ENCODE measurements at regions of chr5 and their contacts with region 1.

Region 1: GRCh38 chr5:142748568-142749249 is 21.5 kb upstream of the ARHGAP26 start:
- DNase-seq: peak; percentile 53
- ATAC-seq: peak; percentile 75
- H3K4me3 Mint-ChIP-seq: no peak overlapping the region
- H3K27ac Mint-ChIP-seq: no peak overlapping the region
- H3K4me1 Mint-ChIP-seq: peaks cover 7% of the 10 kb centered on the region
- H3K27me3 Mint-ChIP-seq: no peaks in the 10 kb centered on the region
- CTCF ChIP-seq: peak; percentile 51; the same call in 1 of the 2 replicates

Region 2: GRCh38 chr5:142472300-142472951 is 276.3 kb before region 1 on chr5:
- CTCF ChIA-PET with region 1: no interaction called
- POLR2A ChIA-PET with region 1: no interaction called
- DNase-seq: no peak
- ATAC-seq: no peak
- H3K4me3 Mint-ChIP-seq: no peak overlapping the region
- H3K27ac Mint-ChIP-seq: no peak overlapping the region; the same call in 1 of the 2 replicates
- H3K4me1 Mint-ChIP-seq: peaks cover 43% of the 10 kb centered on the region
- H3K27me3 Mint-ChIP-seq: no peaks in the 10 kb centered on the region; the same call in 1 of the 2 replicates
- CTCF ChIP-seq: no peak

Region 3: DNA sequence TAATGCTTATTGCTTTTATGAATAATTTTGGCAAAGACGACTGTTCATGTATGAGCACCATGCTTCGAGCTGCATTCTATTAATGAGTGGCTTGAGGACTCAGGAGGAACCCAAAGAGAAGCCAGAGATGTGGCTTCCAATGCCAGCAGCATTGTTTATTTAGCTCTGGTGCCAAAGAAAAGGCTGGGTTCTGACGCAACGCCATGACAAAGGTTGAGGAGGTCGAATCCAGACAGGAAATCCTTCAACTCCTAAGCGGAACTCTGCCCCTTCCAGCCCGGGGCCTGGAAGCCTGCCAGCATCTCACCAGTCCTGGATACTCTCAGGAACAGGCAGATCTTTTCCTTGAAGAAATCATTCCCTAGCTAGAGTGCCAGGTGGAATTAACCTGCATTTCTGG is 125.8 kb after region 1 on chr5:
- CTCF ChIA-PET with region 1: interaction called, 68 read pairs
- POLR2A ChIA-PET with region 1: no interaction called
- DNase-seq: no peak
- ATAC-seq: no peak
- H3K4me3 Mint-ChIP-seq: no peak overlapping the region
- H3K27ac Mint-ChIP-seq: no peak overlapping the region
- H3K4me1 Mint-ChIP-seq: peaks cover 47% of the 10 kb centered on the region
- H3K27me3 Mint-ChIP-seq: no peaks in the 10 kb centered on the region
- CTCF ChIP-seq: no peak

Region 4: DNA sequence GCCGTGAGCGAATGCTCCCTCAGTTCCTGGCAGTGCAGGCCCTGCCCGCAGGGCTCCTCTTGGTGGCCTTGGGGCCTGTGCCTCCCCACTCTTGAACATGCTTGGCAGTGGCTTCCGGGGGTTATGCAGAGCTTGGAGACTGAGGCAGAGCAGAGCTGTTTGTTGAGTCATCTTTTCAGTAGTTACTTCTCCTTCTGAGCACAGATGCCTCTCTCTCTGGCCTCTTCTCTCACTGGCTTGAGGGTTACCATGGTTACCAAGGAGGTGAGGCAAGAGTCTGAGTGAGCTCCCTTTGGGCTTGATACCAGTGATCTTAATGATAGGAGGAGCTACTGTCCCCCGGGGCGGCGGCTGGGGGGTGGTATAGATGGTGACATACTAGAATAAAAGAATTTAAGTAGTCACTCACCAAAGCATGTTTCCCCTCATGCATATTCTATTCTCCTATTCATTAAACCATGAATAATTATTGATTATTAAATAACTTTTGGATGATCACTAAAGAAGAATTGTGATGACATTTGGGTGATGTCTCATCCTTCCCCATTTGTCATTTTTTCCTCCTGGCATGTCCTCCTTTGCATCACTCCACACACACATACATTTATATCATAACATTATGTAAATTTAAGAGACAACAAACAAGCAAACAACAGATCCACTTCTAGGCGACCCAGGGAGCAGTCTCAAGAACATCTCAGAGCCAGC is 132.5 kb after region 1 on chr5:
- CTCF ChIA-PET with region 1: interaction called, 68 read pairs
- POLR2A ChIA-PET with region 1: no interaction called
- DNase-seq: no peak
- ATAC-seq: peak; percentile 73
- H3K4me3 Mint-ChIP-seq: no peak overlapping the region
- H3K27ac Mint-ChIP-seq: no peak overlapping the region; the same call in 1 of the 2 replicates
- H3K4me1 Mint-ChIP-seq: peaks cover 44% of the 10 kb centered on the region
- H3K27me3 Mint-ChIP-seq: no peaks in the 10 kb centered on the region
- CTCF ChIP-seq: no peak

Region 5: GRCh38 chr5:142906863-142907671 is 158.4 kb after region 1 on chr5:
- CTCF ChIA-PET with region 1: no interaction called
- POLR2A ChIA-PET with region 1: no interaction called
- DNase-seq: no peak
- ATAC-seq: no peak
- H3K4me3 Mint-ChIP-seq: no peak overlapping the region
- H3K27ac Mint-ChIP-seq: no peak overlapping the region
- H3K4me1 Mint-ChIP-seq: peaks cover 12% of the 10 kb centered on the region
- H3K27me3 Mint-ChIP-seq: no peaks in the 10 kb centered on the region
- CTCF ChIP-seq: no peak

Region 6: DNA sequence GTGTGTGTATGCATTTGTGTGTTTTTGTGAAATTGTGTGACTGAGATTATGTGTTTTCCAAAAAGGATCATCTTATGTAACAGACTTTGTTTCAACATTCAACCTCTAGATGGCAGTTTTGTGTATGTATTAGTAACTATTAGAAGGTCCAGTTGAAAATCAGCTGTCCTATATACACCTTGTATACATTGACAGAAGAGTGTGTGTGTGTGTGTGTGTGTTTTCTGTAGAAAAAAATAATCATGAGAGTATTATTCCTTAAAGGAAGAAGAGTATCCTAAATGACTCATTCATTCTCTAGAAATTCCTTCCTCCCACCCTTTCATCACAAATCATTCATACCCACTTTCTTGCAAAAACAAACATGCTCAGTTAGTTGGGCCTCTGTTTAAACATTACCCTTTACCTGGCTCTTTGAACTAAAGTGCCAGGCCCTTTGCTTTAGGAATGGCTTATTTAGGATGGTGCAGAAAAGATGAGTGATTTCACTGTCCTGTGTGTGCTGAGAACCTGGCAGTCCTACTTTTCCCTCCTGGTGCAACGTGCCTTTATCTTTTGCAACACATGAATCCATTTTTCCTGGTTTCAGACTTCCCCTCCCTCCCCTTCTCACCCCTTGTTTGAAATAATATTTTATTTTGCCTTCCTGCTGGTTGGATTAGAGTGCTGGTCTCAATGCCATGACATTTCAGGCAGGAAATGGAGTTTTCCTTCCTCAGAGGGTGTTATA is 173.7 kb after region 1 on chr5:
- CTCF ChIA-PET with region 1: no interaction called
- POLR2A ChIA-PET with region 1: no interaction called
- DNase-seq: no peak
- ATAC-seq: peak; percentile 43; the same call in 1 of the 2 replicates
- H3K4me3 Mint-ChIP-seq: no peak overlapping the region
- H3K27ac Mint-ChIP-seq: no peak overlapping the region
- H3K4me1 Mint-ChIP-seq: peaks cover 17% of the 10 kb centered on the region
- H3K27me3 Mint-ChIP-seq: no peaks in the 10 kb centered on the region
- CTCF ChIP-seq: no peak

Measured in WTC11 (cell line).